ENCODE measurements at regions of chr1 and their contacts with region 1.

Region 1: GRCh38 chr1:27772933-27773825 is at the start of gene STX12:
- DNase-seq: peak; percentile 100
- H3K4me3 Mint-ChIP-seq: peak within 1 kb of the TSS; percentile 86
- H3K27ac Mint-ChIP-seq: peak within 1 kb of the TSS; percentile 98
- H3K4me1 Mint-ChIP-seq: peaks cover 26% of the 10 kb centered on the region
- H3K27me3 Mint-ChIP-seq: peaks cover 1% of the 10 kb centered on the region
- total RNA-seq, gene STX12: 28.5 and 28.8 TPM in 2 replicates

Region 2: DNA sequence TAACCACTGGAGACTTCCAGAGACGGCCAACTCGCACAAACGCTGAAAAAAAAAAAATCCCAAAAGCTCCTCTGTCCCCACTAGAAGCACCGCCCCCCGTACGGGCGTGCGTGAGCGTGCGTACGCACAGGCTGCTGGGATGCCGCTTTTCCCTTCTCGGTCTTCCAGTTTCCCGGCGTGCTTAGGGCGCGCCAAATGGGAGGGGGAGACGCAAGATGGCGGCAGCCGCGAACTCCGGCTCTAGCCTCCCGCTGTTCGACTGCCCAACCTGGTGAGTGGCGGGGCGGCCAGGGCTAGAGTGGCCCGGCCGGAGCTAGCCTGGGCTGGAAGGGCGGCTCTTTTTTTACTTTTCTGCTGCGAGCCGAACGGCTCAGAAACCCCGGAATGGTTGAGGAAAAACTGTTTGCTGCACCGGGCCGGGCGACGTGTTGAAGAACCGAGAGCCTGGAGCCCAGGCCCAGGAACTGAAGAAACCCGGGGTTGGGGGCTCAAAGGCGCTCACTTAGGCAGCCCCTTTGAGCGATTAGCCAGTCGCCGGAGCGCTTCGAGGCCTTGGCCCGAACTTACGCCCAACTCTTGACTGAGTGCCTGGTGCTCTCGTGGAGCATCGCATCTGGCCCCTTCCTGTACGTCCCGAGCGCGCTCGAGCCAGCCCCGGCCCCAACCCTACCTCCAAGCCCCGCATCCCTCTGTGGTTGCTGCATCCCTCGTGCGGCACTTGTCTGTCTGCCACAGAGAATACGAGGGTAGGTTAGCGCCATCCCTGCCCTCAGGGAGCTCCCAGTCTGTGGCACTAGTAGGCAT is 57.6 kb after region 1 on chr1 and contains the start of gene PPP1R8:
- intact Hi-C with region 1: loop called (anchors 2 kb)
- DNase-seq: peak; percentile 97
- H3K4me3 Mint-ChIP-seq: peak within 1 kb of the TSS; percentile 95
- H3K27ac Mint-ChIP-seq: peak within 1 kb of the TSS; percentile 90
- H3K4me1 Mint-ChIP-seq: peaks cover 22% of the 10 kb centered on the region
- H3K27me3 Mint-ChIP-seq: no peaks in the 10 kb centered on the region
- total RNA-seq, gene PPP1R8: 80.3 TPM in 2 replicates